Activated CD4-positive, alpha-beta T cell treated with anti-CD3 and anti-CD28 coated beads, Interleukin-2, amount 10 ng/mL, durations not matched to agents 24 days and 14 days (primary cell): ENCODE measurements at regions of chr6 and their contacts with region 1.

Region 1: GRCh38 chr6:37207903-37208456 is 38.0 kb downstream of the PIM1 start:
- DNase-seq: peak; percentile 96
- H3K4me3 Mint-ChIP-seq: peak overlapping the region; percentile 57
- H3K27ac Mint-ChIP-seq: peak overlapping the region; percentile 86
- H3K4me1 Mint-ChIP-seq: peaks cover 58% of the 10 kb centered on the region
- H3K27me3 Mint-ChIP-seq: no peaks in the 10 kb centered on the region

Region 2: GRCh38 chr6:36885461-36886401 is 322.2 kb before region 1 on chr6 and contains the start of gene C6orf89:
- intact Hi-C with region 1: loop called (anchors 5 kb)
- DNase-seq: peak; percentile 99
- H3K4me3 Mint-ChIP-seq: peak within 1 kb of the TSS; percentile 89
- H3K27ac Mint-ChIP-seq: peak within 1 kb of the TSS; percentile 89
- H3K4me1 Mint-ChIP-seq: peaks cover 28% of the 10 kb centered on the region
- H3K27me3 Mint-ChIP-seq: no peaks in the 10 kb centered on the region
- total RNA-seq, gene C6orf89: 25.9 and 27.4 TPM in 2 replicates

Region 3: DNA sequence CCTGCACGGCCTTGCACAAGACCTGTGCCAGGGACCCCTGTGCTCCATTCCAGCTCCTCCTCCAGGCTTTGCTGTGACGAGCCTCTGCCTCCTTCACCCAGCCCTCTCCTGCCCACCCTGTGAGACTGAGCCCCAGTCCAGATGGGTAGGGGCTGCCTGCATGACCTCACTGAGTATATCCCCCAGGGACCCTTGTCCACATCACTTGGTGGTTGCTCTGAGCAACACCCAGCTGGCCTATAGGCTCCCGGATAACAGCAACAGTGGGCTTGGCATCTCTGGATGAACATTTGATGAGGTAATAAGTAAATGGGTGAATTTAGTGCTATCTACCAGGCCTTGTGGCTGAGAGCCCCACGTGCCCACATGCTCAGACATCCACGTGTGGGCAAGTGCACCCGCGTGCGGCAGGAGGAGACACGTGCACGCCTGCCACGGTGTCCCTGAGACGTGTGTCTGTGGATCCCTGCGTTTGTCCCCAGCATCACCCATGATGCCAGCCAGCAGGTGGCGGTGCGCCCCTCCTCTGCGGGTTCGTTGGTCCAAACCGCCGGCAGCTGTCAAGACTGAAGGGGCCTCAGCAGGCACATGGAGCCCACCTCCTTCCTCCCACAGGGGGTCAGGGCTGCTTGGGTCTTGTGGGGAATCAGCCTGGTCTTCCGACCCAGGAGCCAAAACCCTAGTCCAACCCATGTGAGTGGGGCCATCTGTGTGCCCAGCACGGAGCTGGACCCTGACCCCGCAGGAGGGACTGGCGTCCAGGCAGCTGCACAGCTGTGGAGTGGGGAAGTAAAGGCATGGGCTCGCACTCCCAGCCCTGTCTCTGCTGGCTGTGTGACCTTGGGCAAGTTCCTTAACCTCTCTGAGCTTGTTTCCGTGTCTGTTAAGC is 156.6 kb before region 1 on chr6:
- intact Hi-C with region 1: loop called (anchors 1 kb)
- DNase-seq: peak; percentile 96
- H3K4me3 Mint-ChIP-seq: peak overlapping the region; percentile 88
- H3K27ac Mint-ChIP-seq: peak overlapping the region; percentile 98
- H3K4me1 Mint-ChIP-seq: peaks cover 57% of the 10 kb centered on the region
- H3K27me3 Mint-ChIP-seq: no peaks in the 10 kb centered on the region

Region 4: GRCh38 chr6:37182736-37183590 is 25.0 kb before region 1 on chr6:
- intact Hi-C with region 1: loop called (anchors 1 kb)
- DNase-seq: peak; percentile 93
- H3K4me3 Mint-ChIP-seq: peak overlapping the region; percentile 74
- H3K27ac Mint-ChIP-seq: peak overlapping the region; percentile 98
- H3K4me1 Mint-ChIP-seq: peaks cover 55% of the 10 kb centered on the region
- H3K27me3 Mint-ChIP-seq: no peaks in the 10 kb centered on the region